GM10248 (cell line): ENCODE measurements at regions of chr16 and their contacts with region 1.

Region 1: GRCh38 chr16:2267913-2268666 is at the start of gene RNPS1:
- DNase-seq: peak; percentile 100
- CTCF ChIP-seq: no peak

Region 2: GRCh38 chr16:2296661-2297505 is 28.8 kb after region 1 on chr16:
- CTCF ChIA-PET with region 1: interaction called, 10 read pairs
- POLR2A ChIA-PET with region 1: no interaction called
- DNase-seq: peak; percentile 55
- CTCF ChIP-seq: peak; percentile 61